ENCODE measurements at regions of chr16 and their contacts with region 1.

Region 1: GRCh38 chr16:67521095-67521804 is 7.4 kb upstream of the RIPOR1 start:
- DNase-seq: peak; percentile 94 to 97 (median 95)
- ATAC-seq: peak; percentile 88 to 95 (median 93)
- H3K4me3 ChIP-seq: peak overlapping the region in 10 of 12 donors; percentile 23 to 57 (median 46)
- H3K27ac ChIP-seq: peak overlapping the region; percentile 51 to 93 (median 88)
- H3K4me1 ChIP-seq: peaks cover 0 to 25% (median 7%) of the 10 kb centered on the region in 12 donors
- H3K27me3 ChIP-seq: no peaks in the 10 kb centered on the region
- CTCF ChIP-seq: peak; percentile 67 to 89 (median 76)
- POLR2A ChIP-seq: peak in 1 of 2 donors; percentile 35

Region 2: DNA sequence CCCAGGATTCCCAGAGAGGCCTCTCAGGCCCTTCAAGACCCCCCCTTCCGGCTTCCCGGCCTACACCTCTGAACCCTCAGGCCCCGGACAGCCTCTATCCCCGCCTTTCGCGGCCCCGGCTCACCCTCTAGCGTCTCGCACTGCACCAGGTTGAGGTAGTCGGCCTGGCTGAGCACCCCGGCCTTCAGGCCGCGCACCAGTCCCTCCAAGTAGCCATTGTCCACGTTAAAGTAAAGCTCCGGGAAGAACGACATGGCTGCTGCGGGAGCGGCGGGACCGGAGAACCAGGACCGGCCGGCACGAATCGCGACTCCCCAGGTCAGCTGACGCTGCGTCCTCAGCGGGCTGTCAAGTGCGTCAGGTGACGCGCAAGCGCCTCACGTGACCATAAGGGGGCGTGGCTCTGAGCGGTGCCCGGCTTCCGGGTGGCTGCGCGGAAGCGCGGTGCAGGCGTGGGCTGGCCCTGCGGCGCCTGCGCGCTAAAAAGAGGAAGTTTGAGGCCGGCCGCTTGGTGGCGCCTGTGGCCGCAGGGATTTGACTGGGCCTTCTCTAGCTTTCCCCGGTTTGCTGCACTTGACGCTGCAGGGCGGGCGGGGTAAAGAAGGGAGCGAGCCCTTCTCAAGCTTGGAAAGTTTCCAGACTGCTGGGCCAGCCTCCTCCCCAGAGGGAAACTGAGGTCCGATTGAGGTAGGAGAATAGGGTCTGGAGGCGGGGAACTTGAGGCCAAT is 40.3 kb before region 1 on chr16 and contains the start of gene ATP6V0D1:
- intact Hi-C with region 1: loop called in 3 of 10 experiments (anchors 5 kb)
- DNase-seq: peak; percentile 98 to 99 (median 99)
- ATAC-seq: peak; percentile 95 to 97 (median 96)
- H3K4me3 ChIP-seq: peak within 1 kb of the TSS; percentile 74 to 99 (median 88)
- H3K27ac ChIP-seq: peak within 1 kb of the TSS; percentile 49 to 95 (median 90)
- H3K4me1 ChIP-seq: peaks cover 0 to 63% (median 37%) of the 10 kb centered on the region in 12 donors
- H3K27me3 ChIP-seq: no peaks in the 10 kb centered on the region
- CTCF ChIP-seq: peak; percentile 80 to 98 (median 90)
- POLR2A ChIP-seq: peak in 1 of 2 donors; percentile 84
- total RNA-seq, gene ATP6V0D1: 52.7 to 141 (median 68.5) TPM

Region 3: DNA sequence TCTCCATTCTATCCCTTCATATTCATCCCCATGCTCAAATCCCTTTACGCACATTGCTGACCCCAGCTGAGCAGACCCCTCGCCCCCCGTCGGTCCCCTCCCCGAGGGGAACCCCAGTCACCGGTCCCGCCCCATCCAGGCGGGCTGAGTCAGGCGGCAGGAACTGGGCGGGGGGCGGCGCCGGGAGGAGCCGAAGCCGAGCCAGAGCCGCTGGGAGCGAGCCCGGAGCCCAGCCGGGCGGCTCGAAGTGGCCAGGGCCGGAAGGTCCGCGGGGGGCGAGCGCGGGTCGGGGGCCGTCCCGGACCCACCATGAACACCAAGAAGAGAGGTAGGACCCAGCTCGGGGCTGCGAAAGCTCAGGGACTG is 16.0 kb after region 1 on chr16:
- intact Hi-C with region 1: loop called in 1 of 10 experiments (anchors 1 kb)
- DNase-seq: peak; percentile 83 to 89 (median 84)
- ATAC-seq: peak; percentile 21 to 79 (median 68)
- H3K4me3 ChIP-seq: peak overlapping the region; percentile 62 to 97 (median 80)
- H3K27ac ChIP-seq: peak overlapping the region; percentile 83 to 100 (median 96)
- H3K4me1 ChIP-seq: peaks cover 5 to 97% (median 70%) of the 10 kb centered on the region in 12 donors
- H3K27me3 ChIP-seq: no peaks in the 10 kb centered on the region
- CTCF ChIP-seq: no peak
- POLR2A ChIP-seq: peak in 1 of 2 donors; percentile 47

Region 4: DNA sequence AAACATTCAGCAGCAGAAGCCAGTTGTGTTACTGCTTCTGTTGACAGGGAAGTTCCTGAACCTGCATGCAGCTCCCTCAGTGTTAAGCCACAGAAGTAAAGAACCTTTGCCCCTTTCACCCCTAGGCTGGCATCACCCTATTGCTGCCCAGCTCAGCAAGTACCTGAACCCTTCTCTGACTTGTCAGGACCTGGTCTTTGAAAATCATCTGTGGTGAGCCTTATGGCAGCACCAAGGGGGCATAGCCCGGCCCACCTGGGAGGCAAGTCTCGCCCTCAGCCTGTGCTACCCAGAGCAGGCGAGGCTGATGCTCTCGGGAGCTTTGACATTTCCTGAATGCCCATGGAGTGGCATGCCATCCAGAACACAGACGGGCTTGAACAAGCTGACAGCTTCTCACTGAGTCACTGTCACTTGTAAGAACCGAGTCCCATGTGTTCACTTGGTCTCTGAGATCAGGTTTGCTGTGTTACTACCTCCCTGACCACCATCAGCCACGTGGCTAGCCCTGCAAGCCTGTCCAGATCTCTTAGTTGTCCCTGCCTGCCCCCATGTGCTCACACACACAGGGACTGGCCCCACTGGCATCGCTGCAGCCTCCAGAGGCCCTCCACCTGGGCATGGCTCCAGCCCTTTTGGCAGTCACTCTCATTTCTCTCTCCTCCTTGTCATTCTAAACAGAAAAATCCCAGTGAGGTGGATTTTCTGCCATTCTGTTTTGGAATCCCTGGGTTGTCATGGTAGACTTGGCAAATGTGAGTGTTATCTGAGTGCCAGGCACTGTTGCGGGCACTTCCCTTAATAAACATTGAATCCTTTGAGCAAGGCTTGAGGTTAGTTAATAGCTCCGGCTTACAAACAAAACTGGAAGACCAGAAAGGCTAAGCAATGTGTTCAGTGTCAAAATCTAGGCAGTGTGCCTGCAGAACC is 120.8 kb after region 1 on chr16:
- intact Hi-C with region 1: loop called in 3 of 10 experiments (anchors 1 to 5 kb)
- DNase-seq: peak in 4 of 5 donors; percentile 76 to 90 (median 81)
- ATAC-seq: peak; percentile 88 to 97 (median 94)
- H3K4me3 ChIP-seq: no peak overlapping the region
- H3K27ac ChIP-seq: peak overlapping the region in 7 of 12 donors; percentile 16 to 54 (median 45)
- H3K4me1 ChIP-seq: peaks cover 0 to 30% (median 12%) of the 10 kb centered on the region in 12 donors
- H3K27me3 ChIP-seq: peaks cover 0 to 29% (median 18%) of the 10 kb centered on the region in 9 donors
- CTCF ChIP-seq: no peak
- POLR2A ChIP-seq: no peak

Region 5: GRCh38 chr16:67667817-67668494 is 146.7 kb after region 1 on chr16:
- intact Hi-C with region 1: loop called (anchors 1 to 5 kb)
- DNase-seq: peak; percentile 84 to 91 (median 89)
- ATAC-seq: peak; percentile 83 to 91 (median 85)
- H3K4me3 ChIP-seq: peak overlapping the region in 10 of 12 donors; percentile 65 to 94 (median 84)
- H3K27ac ChIP-seq: peak overlapping the region in 11 of 12 donors; percentile 85 to 94 (median 89)
- H3K4me1 ChIP-seq: peaks cover 5 to 39% (median 28%) of the 10 kb centered on the region in 12 donors
- H3K27me3 ChIP-seq: no peaks in the 10 kb centered on the region
- CTCF ChIP-seq: peak; percentile 66 to 94 (median 84)
- POLR2A ChIP-seq: peak in 1 of 2 donors; percentile 6

Region 6: DNA sequence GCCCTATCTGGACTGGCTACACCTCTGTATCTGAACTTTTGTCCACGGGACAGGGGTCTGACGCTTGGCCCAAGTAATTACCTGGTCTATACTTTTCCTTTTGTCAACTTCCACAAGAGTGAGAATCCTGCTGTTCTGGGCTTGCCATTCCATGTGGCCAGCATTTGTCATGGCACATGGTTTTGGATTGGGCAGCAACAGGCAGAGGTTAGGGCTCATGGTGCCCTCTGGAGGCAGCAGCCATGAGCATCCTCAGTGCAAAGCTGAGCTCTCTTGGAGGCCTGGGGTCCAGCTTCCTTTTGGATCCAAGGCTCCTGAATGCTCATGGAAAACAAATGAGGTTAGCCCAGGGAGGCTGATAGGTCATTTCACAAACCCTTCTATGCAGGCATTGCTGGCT is 344.1 kb after region 1 on chr16:
- intact Hi-C with region 1: loop called in 1 of 10 experiments (anchors 10 kb)
- DNase-seq: no peak
- ATAC-seq: no peak
- H3K4me3 ChIP-seq: no peak overlapping the region
- H3K27ac ChIP-seq: peak overlapping the region in 2 of 12 donors; percentile 87 to 93
- H3K4me1 ChIP-seq: peaks cover 6 to 52% (median 43%) of the 10 kb centered on the region in 12 donors
- H3K27me3 ChIP-seq: no peaks in the 10 kb centered on the region
- CTCF ChIP-seq: peak in 10 of 12 donors; percentile 19 to 51 (median 30)
- POLR2A ChIP-seq: no peak

Region 7: DNA sequence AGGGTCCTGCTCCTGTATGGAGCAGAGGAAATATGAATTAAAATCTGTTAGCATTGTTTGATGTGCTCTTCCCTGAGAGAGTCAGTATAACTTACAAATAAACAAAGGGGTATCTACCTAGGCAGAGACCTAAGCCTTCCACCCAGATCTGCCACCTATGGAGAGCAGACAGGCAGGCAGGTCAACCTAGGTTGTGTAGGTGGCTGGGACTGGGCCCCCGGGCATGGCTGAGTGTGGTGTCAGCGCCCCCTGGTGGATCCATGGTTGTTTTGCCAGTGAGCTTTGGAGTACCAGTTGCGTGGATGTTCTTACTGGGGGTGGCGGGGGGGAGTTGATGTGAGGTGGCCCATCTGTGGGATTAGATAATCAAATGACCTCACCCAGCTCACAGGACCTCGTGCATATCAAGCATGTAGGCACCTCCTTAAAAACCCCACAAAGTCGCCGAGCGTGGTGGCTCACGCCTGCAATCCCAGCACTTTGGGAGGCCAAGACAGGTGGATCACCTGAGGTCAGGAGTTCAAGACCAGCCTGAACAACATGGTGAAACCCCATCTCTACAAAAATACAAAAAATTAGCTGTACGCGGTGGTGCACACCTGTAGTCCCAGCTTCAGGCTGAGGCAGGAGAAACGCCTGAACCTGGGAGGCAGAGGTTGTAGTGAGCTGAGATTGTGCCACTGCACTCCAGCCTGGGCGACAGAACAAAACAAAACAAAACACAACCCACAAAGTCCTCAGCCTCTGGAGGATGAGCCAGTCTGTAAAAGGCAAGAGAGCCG is 519.4 kb after region 1 on chr16:
- intact Hi-C with region 1: loop called in 1 of 10 experiments (anchors 10 kb)
- DNase-seq: peak; percentile 76 to 92 (median 84)
- ATAC-seq: peak; percentile 84 to 95 (median 94)
- H3K4me3 ChIP-seq: no peak overlapping the region
- H3K27ac ChIP-seq: peak overlapping the region in 1 of 12 donors; percentile 72
- H3K4me1 ChIP-seq: peaks cover 0 to 42% (median 0%) of the 10 kb centered on the region in 12 donors
- H3K27me3 ChIP-seq: no peaks in the 10 kb centered on the region
- CTCF ChIP-seq: peak; percentile 70 to 89 (median 82)
- POLR2A ChIP-seq: no peak